HepG2 (cell line): ENCODE measurements at regions of chr17 and their contacts with region 1.

Region 1: GRCh38 chr17:30104575-30105339 is 11.9 kb upstream of the NSRP1 start:
- DNase-seq: peak; percentile 88
- ATAC-seq: peak; percentile 98
- H3K4me3 ChIP-seq: peak overlapping the region; percentile 4 to 56 (median 37)
- H3K27ac ChIP-seq: peak overlapping the region; percentile 59
- H3K4me1 ChIP-seq: peaks cover 21% of the 10 kb centered on the region
- H3K27me3 ChIP-seq: 0 out of 5 replicates have a peak, but pooled peaks cover 0 to 1% of the 10 kb centered on the region in 2 experiments
- CTCF ChIP-seq: peak; percentile 94
- EP300 ChIP-seq: peak in 1 of 2 experiments; percentile 4; a peak in 1 of 4 replicates
- POLR2A ChIP-seq: peak in 1 of 2 experiments; percentile 46; a peak in 1 of 4 replicates
- RAD21 ChIP-seq: peak; percentile 79

Region 2: DNA sequence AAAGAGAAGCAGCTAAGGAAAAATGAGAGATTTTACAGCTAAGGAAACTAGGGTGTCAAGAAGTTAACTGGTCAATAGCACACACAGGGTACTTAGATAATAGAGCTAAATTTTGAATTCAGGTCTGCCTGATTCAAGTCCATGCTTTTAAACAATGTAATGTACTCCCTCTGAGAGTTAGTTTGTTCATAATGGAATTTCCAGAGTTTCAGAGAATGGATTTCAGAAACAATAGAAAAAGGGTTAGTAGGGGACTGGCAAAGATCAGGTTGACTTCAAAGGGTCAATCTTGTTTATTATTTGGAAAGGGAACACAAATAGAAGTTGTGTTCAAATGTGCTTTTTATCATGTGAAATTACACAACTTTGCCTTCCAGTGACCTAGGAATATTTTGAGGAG is 29.8 kb after region 1 on chr17:
- CTCF ChIA-PET with region 1: no interaction called
- POLR2A ChIA-PET with region 1: no interaction called
- in situ Hi-C with region 1: no loop called
- intact Hi-C with region 1: loop called (anchors 2 kb)
- DNase-seq: no peak
- ATAC-seq: no peak
- H3K4me3 ChIP-seq: no peak overlapping the region
- H3K27ac ChIP-seq: no peak overlapping the region
- H3K4me1 ChIP-seq: no peaks in the 10 kb centered on the region
- H3K27me3 ChIP-seq: no peaks in the 10 kb centered on the region
- CTCF ChIP-seq: no peak
- EP300 ChIP-seq: no peak
- POLR2A ChIP-seq: no peak
- RAD21 ChIP-seq: no peak

Region 3: GRCh38 chr17:30173649-30174048 is 68.9 kb after region 1 on chr17:
- CTCF ChIA-PET with region 1: no interaction called
- POLR2A ChIA-PET with region 1: no interaction called
- in situ Hi-C with region 1: no loop called
- intact Hi-C with region 1: no loop called
- DNase-seq: no peak
- ATAC-seq: no peak
- H3K4me3 ChIP-seq: no peak overlapping the region
- H3K27ac ChIP-seq: no peak overlapping the region
- H3K4me1 ChIP-seq: no peaks in the 10 kb centered on the region
- H3K27me3 ChIP-seq: no peaks in the 10 kb centered on the region
- CTCF ChIP-seq: no peak
- EP300 ChIP-seq: no peak
- POLR2A ChIP-seq: no peak
- RAD21 ChIP-seq: no peak